PC-3 (cell line): ENCODE measurements at regions of chr12 and their contacts with region 1.

Region 1: GRCh38 chr12:46442239-46442638 is 69.7 kb upstream of the SLC38A2 start:
- DNase-seq: peak; percentile 64
- ATAC-seq: peak; percentile 43
- H3K4me3 ChIP-seq: peak overlapping the region; percentile 50
- H3K27ac ChIP-seq: peak overlapping the region; percentile 97
- H3K4me1 ChIP-seq: peaks cover 75% of the 10 kb centered on the region
- H3K27me3 ChIP-seq: no peaks in the 10 kb centered on the region
- CTCF ChIP-seq: no peak

Region 2: GRCh38 chr12:46153268-46153872 is 288.9 kb before region 1 on chr12:
- CTCF ChIA-PET with region 1: no interaction called
- POLR2A ChIA-PET with region 1: no interaction called
- intact Hi-C with region 1: loop called (anchors 5 kb)
- DNase-seq: peak; percentile 56
- ATAC-seq: no peak
- H3K4me3 ChIP-seq: no peak overlapping the region; the same call in 1 of the 2 replicates
- H3K27ac ChIP-seq: no peak overlapping the region
- H3K4me1 ChIP-seq: peaks cover 29% of the 10 kb centered on the region
- H3K27me3 ChIP-seq: no peaks in the 10 kb centered on the region
- CTCF ChIP-seq: peak; percentile 90

Region 3: DNA sequence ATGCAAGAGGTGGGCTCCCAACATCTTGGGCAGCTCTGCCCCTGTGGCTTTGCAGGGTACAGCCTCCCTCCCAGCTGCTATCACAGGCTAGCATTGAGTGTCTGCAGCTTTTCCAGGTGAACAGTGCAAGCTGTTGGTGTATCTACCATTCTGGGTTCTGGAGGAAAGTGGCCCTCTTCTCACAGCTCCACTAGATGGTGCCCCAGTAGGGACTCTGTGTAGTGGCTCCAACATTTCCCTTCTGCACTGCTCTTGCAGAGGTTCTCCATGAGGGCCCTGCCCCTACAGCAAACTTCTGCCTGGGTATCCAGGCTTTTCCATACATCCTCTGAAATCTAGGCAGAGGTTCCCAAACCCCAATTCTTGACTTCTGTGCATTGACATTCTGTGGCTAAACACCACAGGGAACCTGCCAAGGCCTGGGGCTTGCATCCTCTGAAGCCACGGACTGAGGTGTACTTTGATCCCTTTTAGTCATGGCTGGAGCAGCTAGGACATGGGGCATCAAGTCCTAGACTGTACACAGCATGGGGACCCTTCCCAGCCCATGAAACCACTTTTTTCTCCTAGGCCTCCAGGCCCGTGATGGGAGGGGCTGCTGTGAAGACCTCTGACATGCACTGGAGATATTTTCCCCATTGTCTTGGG is 149.4 kb before region 1 on chr12:
- CTCF ChIA-PET with region 1: no interaction called
- POLR2A ChIA-PET with region 1: no interaction called
- intact Hi-C with region 1: no loop called
- DNase-seq: peak; percentile 10
- ATAC-seq: no peak
- H3K4me3 ChIP-seq: no peak overlapping the region
- H3K27ac ChIP-seq: no peak overlapping the region
- H3K4me1 ChIP-seq: no peaks in the 10 kb centered on the region
- H3K27me3 ChIP-seq: no peaks in the 10 kb centered on the region
- CTCF ChIP-seq: no peak

Region 4: GRCh38 chr12:46332260-46332659 is 110.0 kb before region 1 on chr12:
- CTCF ChIA-PET with region 1: no interaction called
- POLR2A ChIA-PET with region 1: no interaction called
- intact Hi-C with region 1: no loop called
- DNase-seq: peak; percentile 81
- ATAC-seq: peak; percentile 82
- H3K4me3 ChIP-seq: no peak overlapping the region
- H3K27ac ChIP-seq: no peak overlapping the region
- H3K4me1 ChIP-seq: peaks cover 8% of the 10 kb centered on the region
- H3K27me3 ChIP-seq: no peaks in the 10 kb centered on the region
- CTCF ChIP-seq: no peak

Region 5: DNA sequence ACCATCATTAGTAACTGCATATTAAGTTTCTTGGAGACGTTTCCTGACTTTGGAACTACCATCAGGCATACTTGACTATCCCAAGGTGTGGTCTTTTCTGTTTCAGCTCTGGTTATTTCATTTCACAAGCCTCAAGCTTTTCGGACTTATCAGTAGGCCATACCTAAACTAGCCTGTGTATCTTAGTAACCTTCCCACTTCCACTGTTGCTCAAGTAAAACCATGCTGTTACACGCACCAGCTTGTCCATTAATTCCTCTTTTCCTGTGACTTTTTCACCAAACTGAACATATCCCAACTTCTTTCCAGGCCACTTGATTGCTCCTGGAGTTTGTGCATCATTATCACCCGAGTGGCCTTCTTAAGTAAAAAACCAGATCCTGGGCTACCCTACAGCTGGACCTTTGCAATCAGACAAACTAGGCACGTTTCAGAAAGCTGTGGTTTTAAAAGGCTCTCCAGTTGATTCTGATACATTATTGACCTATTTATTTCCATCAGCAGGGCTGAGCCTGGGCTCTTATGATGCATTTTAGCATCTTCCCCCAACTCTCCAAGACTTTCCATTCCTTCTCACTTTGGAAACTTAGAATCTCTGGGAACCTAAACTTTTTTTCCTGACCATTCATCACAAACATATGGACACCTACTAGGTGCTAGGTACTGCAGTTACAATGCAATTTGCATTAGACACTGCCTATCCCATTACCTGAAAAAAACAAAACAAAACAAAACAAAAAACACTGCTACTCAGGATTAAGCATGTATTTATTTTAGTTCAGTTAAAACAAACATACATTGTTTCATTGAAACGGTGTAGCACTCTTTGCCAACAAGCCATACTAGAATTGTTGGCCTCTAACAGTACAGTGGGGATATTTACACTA is 84.6 kb before region 1 on chr12:
- CTCF ChIA-PET with region 1: no interaction called
- POLR2A ChIA-PET with region 1: no interaction called
- intact Hi-C with region 1: no loop called
- DNase-seq: peak; percentile 39
- ATAC-seq: peak; percentile 46
- H3K4me3 ChIP-seq: no peak overlapping the region
- H3K27ac ChIP-seq: no peak overlapping the region
- H3K4me1 ChIP-seq: no peaks in the 10 kb centered on the region
- H3K27me3 ChIP-seq: no peaks in the 10 kb centered on the region
- CTCF ChIP-seq: no peak

Region 6: DNA sequence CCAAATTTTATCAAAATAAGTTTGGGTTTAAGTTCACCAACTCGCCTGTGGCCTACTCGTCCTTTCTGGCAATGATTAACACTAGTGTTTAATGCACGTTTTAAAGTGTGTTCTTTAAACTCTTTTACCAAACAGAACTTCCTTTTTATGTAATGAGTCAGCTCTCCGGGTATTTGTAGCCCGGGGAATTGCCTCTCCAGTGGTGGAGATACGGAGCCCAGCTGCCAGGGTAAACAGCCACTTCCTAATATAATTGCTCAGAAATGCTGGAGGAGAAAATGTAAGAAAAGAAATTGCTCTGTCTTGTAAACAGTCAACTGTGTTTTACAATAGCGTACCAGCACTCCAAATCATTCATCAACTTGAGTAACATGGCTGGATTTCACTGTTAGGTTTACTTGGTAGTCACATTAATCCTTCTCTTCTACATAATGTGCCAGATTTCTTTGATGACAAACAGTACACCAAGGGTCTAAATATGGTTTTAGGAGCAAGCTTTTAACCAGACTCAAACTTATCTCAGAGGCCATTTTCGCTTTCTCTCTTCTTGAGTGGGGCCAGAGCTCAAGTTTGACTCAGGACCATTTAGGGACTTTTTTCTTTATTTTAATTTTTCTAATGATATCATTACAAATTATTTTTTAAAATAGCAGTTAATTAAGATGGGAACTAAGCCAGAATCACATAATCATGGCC is 31.5 kb after region 1 on chr12:
- CTCF ChIA-PET with region 1: no interaction called
- POLR2A ChIA-PET with region 1: no interaction called
- intact Hi-C with region 1: loop called (anchors 1 kb)
- DNase-seq: peak; percentile 95
- ATAC-seq: peak; percentile 85
- H3K4me3 ChIP-seq: peak overlapping the region; percentile 52; the same call in 1 of the 2 replicates
- H3K27ac ChIP-seq: peak overlapping the region; percentile 83
- H3K4me1 ChIP-seq: peaks cover 59% of the 10 kb centered on the region
- H3K27me3 ChIP-seq: no peaks in the 10 kb centered on the region
- CTCF ChIP-seq: no peak

Region 7: DNA sequence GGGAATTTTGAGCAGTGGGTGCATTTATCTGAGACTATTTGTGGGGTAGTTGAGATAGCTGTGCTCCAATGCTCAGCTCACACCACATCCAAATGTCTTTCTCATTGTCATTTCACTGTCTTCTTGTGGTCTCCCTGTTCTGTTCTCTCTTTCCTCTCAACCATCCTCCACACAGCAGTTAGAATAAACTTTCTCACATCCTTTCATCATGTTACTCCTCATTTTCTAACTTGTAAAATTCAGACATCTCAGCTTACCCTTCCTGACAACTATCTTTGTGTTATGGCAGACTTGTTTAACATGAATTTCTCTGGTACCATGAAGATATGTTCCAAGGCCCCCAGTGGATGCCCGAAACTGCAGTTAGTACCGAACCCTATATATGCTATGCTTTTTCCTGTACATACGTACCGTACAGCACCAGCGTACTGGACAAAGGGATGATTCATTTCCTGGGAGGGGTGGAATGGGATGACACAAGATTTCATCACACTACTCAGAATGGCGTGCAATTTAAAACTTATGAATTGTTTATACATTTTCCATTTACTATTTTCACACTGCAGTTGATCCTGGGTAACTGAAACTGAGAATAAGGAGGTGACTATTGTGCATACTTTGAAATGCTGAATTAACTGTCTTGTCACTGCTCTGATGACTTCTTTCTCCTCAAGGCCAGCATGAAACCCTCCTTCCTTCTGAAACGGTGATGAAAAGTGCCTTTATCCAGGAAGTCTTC is 107.5 kb after region 1 on chr12:
- CTCF ChIA-PET with region 1: interaction called, 3 read pairs
- POLR2A ChIA-PET with region 1: no interaction called
- intact Hi-C with region 1: loop called (anchors 2 kb)
- DNase-seq: peak; percentile 87
- ATAC-seq: peak; percentile 72
- H3K4me3 ChIP-seq: no peak overlapping the region
- H3K27ac ChIP-seq: peak overlapping the region; percentile 94
- H3K4me1 ChIP-seq: peaks cover 82% of the 10 kb centered on the region
- H3K27me3 ChIP-seq: no peaks in the 10 kb centered on the region
- CTCF ChIP-seq: no peak

Region 8: DNA sequence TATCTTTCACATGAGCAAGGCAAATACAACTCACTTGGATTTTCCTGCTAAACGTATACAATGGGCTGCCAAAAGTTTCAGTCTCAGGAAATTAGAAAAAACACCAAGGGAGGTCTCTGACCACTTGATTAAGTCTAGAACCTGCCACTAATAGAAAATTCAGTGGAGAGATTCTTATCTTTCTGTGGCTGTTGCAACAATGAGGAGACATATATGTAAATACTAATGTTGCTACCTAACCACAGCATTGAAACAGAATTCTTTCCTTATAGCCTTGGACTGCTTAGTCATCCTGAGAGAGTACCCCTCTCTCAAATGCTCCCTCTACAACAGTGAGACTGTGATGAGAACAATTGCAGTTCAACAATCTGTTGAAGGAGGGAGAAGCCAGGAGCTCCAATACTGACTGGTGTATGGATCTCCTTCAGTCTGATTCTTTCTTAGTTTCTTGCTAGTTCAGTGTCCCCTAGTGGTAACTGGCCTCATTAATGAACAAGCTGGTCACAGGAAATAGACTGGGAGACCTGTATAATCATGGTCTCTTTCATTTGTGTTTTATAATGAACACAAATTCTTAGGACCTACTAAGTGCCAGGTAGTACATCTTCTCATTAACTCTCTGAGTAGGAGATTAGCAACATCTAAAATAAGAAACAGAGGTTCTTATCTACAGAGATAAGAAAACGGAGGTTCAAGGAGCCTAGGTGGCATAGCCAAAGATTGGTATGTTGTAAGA is 219.0 kb after region 1 on chr12:
- CTCF ChIA-PET with region 1: no interaction called
- POLR2A ChIA-PET with region 1: no interaction called
- intact Hi-C with region 1: loop called (anchors 2 kb)
- DNase-seq: peak; percentile 80
- ATAC-seq: peak; percentile 53
- H3K4me3 ChIP-seq: no peak overlapping the region
- H3K27ac ChIP-seq: peak overlapping the region; percentile 56
- H3K4me1 ChIP-seq: peaks cover 57% of the 10 kb centered on the region
- H3K27me3 ChIP-seq: no peaks in the 10 kb centered on the region
- CTCF ChIP-seq: peak; percentile 87